GM12878 (cell line): ENCODE measurements at regions of chr5 and their contacts with region 1.

Region 1: GRCh38 chr5:11268891-11269290 is 507.9 kb upstream of the DAP start:
- DNase-seq: no peak
- ATAC-seq: no peak
- H3K4me3 ChIP-seq: no peak overlapping the region
- H3K27ac ChIP-seq: no peak overlapping the region
- H3K4me1 ChIP-seq: no peaks in the 10 kb centered on the region
- H3K27me3 ChIP-seq: no peaks in the 10 kb centered on the region
- CTCF ChIP-seq: no peak
- EP300 ChIP-seq: no peak
- POLR2A ChIP-seq: no peak
- RAD21 ChIP-seq: no peak

Region 2: GRCh38 chr5:11082404-11082945 is 186.4 kb before region 1 on chr5:
- CTCF ChIA-PET with region 1: no interaction called
- POLR2A ChIA-PET with region 1: no interaction called
- RAD21 ChIA-PET with region 1: no interaction called
- SMC1A ChIA-PET with region 1: no interaction called
- in situ Hi-C with region 1: no loop called
- intact Hi-C with region 1: no loop called
- DNase-seq: no peak
- ATAC-seq: no peak
- H3K4me3 ChIP-seq: no peak overlapping the region
- H3K27ac ChIP-seq: no peak overlapping the region
- H3K4me1 ChIP-seq: no peaks in the 10 kb centered on the region
- H3K27me3 ChIP-seq: no peaks in the 10 kb centered on the region; a peak in 1 of 4 replicates
- CTCF ChIP-seq: no peak
- EP300 ChIP-seq: no peak
- POLR2A ChIP-seq: no peak
- RAD21 ChIP-seq: no peak

Region 3: GRCh38 chr5:11104651-11105112 is 164.2 kb before region 1 on chr5:
- CTCF ChIA-PET with region 1: no interaction called
- POLR2A ChIA-PET with region 1: no interaction called
- RAD21 ChIA-PET with region 1: no interaction called
- SMC1A ChIA-PET with region 1: no interaction called
- in situ Hi-C with region 1: no loop called
- intact Hi-C with region 1: no loop called
- DNase-seq: no peak
- ATAC-seq: no peak
- H3K4me3 ChIP-seq: no peak overlapping the region
- H3K27ac ChIP-seq: no peak overlapping the region
- H3K4me1 ChIP-seq: no peaks in the 10 kb centered on the region
- H3K27me3 ChIP-seq: 0 out of 4 replicates have a peak, but pooled peaks cover 0 to 2% of the 10 kb centered on the region in 2 experiments
- CTCF ChIP-seq: no peak
- EP300 ChIP-seq: no peak
- POLR2A ChIP-seq: no peak
- RAD21 ChIP-seq: no peak

Region 4: GRCh38 chr5:11494340-11494739 is 225.4 kb after region 1 on chr5:
- CTCF ChIA-PET with region 1: no interaction called
- POLR2A ChIA-PET with region 1: no interaction called
- RAD21 ChIA-PET with region 1: no interaction called
- SMC1A ChIA-PET with region 1: no interaction called
- in situ Hi-C with region 1: no loop called
- intact Hi-C with region 1: loop called (anchors 5 kb)
- DNase-seq: no peak
- ATAC-seq: no peak
- H3K4me3 ChIP-seq: no peak overlapping the region
- H3K27ac ChIP-seq: no peak overlapping the region
- H3K4me1 ChIP-seq: no peaks in the 10 kb centered on the region
- H3K27me3 ChIP-seq: no peaks in the 10 kb centered on the region
- CTCF ChIP-seq: peak; percentile 11 to 30 (median 11); a peak in 3 of 6 replicates
- EP300 ChIP-seq: no peak
- POLR2A ChIP-seq: no peak
- RAD21 ChIP-seq: peak; percentile 5; the same call in 1 of the 2 replicates

Region 5: DNA sequence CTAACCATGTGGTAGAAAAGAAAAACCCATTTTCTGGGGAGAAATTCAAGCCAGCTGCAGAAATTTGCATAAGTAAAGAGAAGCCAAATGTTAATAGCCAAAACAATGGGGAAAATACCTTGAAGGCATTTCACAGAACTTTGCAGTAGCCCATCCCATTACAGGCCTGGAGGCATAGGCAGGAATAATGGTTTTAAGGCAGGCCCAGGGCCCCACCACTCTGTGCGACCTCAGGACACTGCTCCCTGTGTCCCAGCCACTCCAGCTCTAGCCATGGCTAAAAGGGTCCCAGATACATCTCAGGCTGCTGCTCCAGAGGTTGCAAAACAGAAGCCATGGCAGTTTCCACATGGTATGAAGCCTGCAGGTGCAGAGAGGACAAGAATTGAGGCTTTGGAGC is 382.0 kb after region 1 on chr5:
- CTCF ChIA-PET with region 1: no interaction called
- POLR2A ChIA-PET with region 1: no interaction called
- RAD21 ChIA-PET with region 1: no interaction called
- SMC1A ChIA-PET with region 1: no interaction called
- in situ Hi-C with region 1: no loop called
- intact Hi-C with region 1: no loop called
- DNase-seq: no peak
- ATAC-seq: no peak
- H3K4me3 ChIP-seq: no peak overlapping the region
- H3K27ac ChIP-seq: no peak overlapping the region
- H3K4me1 ChIP-seq: no peaks in the 10 kb centered on the region
- H3K27me3 ChIP-seq: no peaks in the 10 kb centered on the region
- CTCF ChIP-seq: no peak
- EP300 ChIP-seq: no peak
- POLR2A ChIP-seq: no peak
- RAD21 ChIP-seq: no peak

Region 6: GRCh38 chr5:11719888-11720481 is 451.1 kb after region 1 on chr5:
- CTCF ChIA-PET with region 1: interaction called, 6 read pairs
- POLR2A ChIA-PET with region 1: no interaction called
- RAD21 ChIA-PET with region 1: no interaction called
- SMC1A ChIA-PET with region 1: no interaction called
- in situ Hi-C with region 1: no loop called
- intact Hi-C with region 1: loop called (anchors 5 kb)
- DNase-seq: no peak
- ATAC-seq: peak; percentile 54; the same call in 1 of the 3 replicates
- H3K4me3 ChIP-seq: no peak overlapping the region
- H3K27ac ChIP-seq: no peak overlapping the region
- H3K4me1 ChIP-seq: no peaks in the 10 kb centered on the region
- H3K27me3 ChIP-seq: no peaks in the 10 kb centered on the region
- CTCF ChIP-seq: peak; percentile 29 to 41 (median 36); a peak in 3 of 6 replicates
- EP300 ChIP-seq: no peak
- POLR2A ChIP-seq: no peak
- RAD21 ChIP-seq: peak; percentile 45

Region 7: DNA sequence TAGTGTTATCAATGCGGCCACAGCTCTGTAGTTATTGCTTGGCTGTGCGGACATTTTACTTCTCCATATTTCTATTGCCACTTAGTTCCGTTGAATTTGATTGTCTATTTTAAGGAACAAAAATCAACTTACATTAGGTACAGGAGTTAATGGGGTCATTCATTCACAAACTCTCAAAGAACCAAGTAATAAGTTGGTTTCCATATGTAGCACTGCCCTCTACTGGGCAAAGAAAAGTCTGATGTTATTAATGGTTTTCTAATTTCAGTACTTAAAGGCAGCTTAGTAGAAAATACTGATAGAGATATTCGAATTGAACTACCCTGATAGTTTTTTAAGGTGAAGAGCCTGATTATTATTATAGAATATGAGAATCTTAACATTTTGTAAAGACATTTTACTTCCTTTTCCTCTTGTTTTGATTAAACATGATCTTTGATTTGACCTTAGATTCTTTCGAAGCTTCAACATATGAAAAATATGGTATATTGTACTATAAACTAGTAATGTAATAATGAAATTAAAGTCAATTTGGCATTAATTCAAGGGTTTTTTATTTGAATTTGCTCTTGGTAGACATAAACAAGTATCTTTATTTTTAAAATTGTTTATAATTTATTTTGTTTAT is 754.8 kb after region 1 on chr5:
- CTCF ChIA-PET with region 1: interaction called, 4 read pairs
- POLR2A ChIA-PET with region 1: no interaction called
- RAD21 ChIA-PET with region 1: no interaction called
- SMC1A ChIA-PET with region 1: no interaction called
- in situ Hi-C with region 1: loop called (anchors 25 kb)
- intact Hi-C with region 1: loop called (anchors 2 kb)
- DNase-seq: peak; percentile 1
- ATAC-seq: peak; percentile 54; the same call in 2 of the 3 replicates
- H3K4me3 ChIP-seq: no peak overlapping the region
- H3K27ac ChIP-seq: no peak overlapping the region
- H3K4me1 ChIP-seq: no peaks in the 10 kb centered on the region
- H3K27me3 ChIP-seq: no peaks in the 10 kb centered on the region
- CTCF ChIP-seq: peak; percentile 45 to 48 (median 47); a peak in 5 of 6 replicates
- EP300 ChIP-seq: no peak
- POLR2A ChIP-seq: no peak
- RAD21 ChIP-seq: peak; percentile 61